Activated CD4-positive, alpha-beta memory T cell treated with anti-CD3 and anti-CD28 coated beads for 36 hours (primary cell): ENCODE measurements at regions of chr9 and their contacts with region 1.

Region 1: DNA sequence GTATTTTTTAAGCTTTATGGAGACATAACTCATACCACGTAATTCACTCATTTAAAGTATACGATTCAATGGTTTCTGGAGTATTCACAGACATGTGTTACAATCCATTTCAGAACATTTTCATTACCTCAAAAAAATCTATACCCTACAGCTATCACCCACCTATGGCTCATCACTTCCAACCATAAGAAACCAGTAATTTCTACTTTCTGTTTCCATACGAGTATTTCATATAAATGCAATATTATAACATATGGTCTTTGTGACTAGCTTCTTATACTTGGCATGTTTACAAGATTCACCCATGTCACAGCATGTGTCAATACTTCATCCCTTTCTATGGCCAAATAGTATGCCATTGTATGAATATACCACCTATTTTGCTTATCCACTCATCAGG is 18.8 kb downstream of the UBQLN1 start:
- DNase-seq: no peak
- H3K4me3 Mint-ChIP-seq: no peak overlapping the region
- H3K27ac Mint-ChIP-seq: peak overlapping the region; percentile 47
- H3K4me1 Mint-ChIP-seq: peaks cover 66% of the 10 kb centered on the region
- H3K27me3 Mint-ChIP-seq: no peaks in the 10 kb centered on the region

Region 2: DNA sequence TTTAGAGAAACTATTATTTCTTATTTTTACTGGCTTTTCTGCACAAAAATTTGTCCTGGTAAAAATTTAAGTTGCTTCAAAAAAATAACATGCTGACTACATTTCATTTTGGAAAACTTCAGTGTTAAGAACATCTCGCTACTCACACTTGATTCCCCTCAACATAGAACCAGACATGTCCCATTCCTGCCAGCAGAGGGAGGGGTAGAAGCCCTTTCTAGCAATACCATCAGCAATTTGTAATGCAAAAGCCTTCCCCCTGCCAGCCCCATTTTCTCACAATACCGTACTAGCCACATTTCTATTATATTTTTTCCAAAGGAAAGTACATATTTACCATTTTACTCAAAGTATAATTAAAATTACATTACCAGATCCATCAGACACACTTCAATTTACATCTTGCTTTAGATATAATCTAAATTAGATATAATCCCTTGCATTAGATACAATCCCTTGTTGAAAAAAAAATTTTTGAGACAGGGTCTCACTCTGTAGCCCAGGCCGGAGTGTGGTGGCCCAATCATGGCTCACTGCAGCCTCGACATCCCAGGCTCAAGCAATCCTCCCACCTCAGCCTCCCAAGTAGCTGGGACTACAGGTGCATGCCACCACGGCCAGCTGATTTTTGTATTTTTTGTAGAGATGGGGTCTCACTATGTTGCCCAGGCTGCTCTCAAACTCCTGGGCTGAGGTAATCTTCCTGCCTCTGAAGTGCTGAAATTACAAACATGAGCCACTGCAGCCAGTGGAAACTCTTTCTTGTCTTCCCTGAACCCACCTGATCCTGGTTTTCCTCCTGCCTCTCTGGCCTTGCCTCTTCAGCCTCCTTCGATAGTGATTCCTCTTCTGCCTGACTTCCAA is 105.5 kb before region 1 on chr9:
- CTCF ChIA-PET with region 1: no interaction called
- POLR2A ChIA-PET with region 1: no interaction called
- intact Hi-C with region 1: no loop called
- DNase-seq: peak; percentile 37
- H3K4me3 Mint-ChIP-seq: no peak overlapping the region
- H3K27ac Mint-ChIP-seq: no peak overlapping the region
- H3K4me1 Mint-ChIP-seq: peaks cover 7% of the 10 kb centered on the region
- H3K27me3 Mint-ChIP-seq: no peaks in the 10 kb centered on the region

Region 3: DNA sequence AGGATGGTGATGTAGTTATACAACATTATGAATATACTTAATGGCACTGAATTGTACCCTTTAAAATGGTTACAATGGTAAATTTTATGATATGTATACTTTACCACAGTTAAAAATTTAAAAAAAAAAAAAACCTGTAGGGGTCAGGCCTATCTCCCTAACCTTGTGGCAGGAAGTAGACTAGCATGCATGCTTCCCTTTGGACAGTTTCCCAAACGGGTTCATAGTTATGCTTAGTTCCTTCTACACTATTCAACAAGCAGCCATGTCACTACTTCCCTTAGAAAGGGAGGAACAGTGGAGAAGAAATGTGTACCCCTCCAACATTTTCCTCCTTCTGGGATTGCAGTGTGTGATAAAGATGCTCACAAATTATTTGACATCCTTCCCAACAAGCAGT is 33.5 kb before region 1 on chr9:
- CTCF ChIA-PET with region 1: no interaction called
- POLR2A ChIA-PET with region 1: no interaction called
- intact Hi-C with region 1: no loop called
- DNase-seq: no peak
- H3K4me3 Mint-ChIP-seq: no peak overlapping the region
- H3K27ac Mint-ChIP-seq: no peak overlapping the region
- H3K4me1 Mint-ChIP-seq: peaks cover 10% of the 10 kb centered on the region
- H3K27me3 Mint-ChIP-seq: no peaks in the 10 kb centered on the region

Region 4: GRCh38 chr9:83698976-83699585 is 10.2 kb after region 1 on chr9:
- CTCF ChIA-PET with region 1: no interaction called
- POLR2A ChIA-PET with region 1: interaction called, 6 read pairs
- intact Hi-C with region 1: loop called (anchors 1 kb)
- DNase-seq: peak; percentile 24
- H3K4me3 Mint-ChIP-seq: no peak overlapping the region
- H3K27ac Mint-ChIP-seq: peak overlapping the region; percentile 75
- H3K4me1 Mint-ChIP-seq: peaks cover 73% of the 10 kb centered on the region
- H3K27me3 Mint-ChIP-seq: no peaks in the 10 kb centered on the region

Region 5: DNA sequence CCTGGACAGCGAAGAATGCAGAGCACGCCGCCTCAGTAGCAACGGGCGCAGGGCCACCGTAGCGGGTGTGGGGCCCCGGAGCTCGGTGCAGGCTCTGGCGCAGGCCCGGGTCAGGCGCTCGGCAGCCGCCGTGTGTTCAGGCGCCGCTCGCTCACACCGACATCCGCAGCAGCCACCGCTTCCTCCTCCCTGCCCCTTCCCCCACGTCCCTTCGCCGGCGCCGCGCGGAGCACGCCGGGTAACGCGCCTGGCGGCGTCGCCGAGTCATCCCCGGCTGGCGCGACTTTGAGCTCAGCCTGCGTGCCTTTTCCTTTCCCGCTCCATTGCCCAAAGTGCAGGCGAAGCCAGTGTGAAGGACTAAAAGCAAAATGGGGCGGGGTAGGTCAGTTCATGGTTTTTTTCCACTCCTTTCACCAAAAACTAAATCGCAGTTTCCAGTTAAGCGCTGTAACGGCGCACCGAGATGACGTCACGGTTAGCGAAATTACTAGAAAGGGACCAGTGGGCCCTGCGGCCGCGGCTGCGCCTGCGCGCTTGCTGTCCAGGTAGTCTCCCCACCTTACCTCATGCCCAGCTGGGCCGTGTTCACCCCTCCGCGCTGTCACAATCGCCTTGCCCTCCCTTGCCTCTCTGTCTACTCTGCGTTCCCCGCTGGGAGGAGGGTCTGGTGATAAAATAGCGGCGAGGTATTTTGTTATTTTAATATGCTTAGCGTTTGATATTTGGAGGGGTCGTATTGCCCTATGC is 19.0 kb after region 1 on chr9 and contains the start of gene UBQLN1:
- CTCF ChIA-PET with region 1: interaction called, 12 read pairs
- POLR2A ChIA-PET with region 1: interaction called, 23 read pairs
- intact Hi-C with region 1: loop called (anchors 1 kb)
- DNase-seq: peak; percentile 94
- H3K4me3 Mint-ChIP-seq: peak within 1 kb of the TSS; percentile 87
- H3K27ac Mint-ChIP-seq: peak within 1 kb of the TSS; percentile 99
- H3K4me1 Mint-ChIP-seq: peaks cover 45% of the 10 kb centered on the region
- H3K27me3 Mint-ChIP-seq: no peaks in the 10 kb centered on the region
- total RNA-seq, gene UBQLN1: 88.8 to 101 TPM

Region 6: GRCh38 chr9:83722686-83723085 is 33.8 kb after region 1 on chr9:
- CTCF ChIA-PET with region 1: no interaction called
- POLR2A ChIA-PET with region 1: no interaction called
- intact Hi-C with region 1: no loop called
- DNase-seq: no peak
- H3K4me3 Mint-ChIP-seq: no peak overlapping the region
- H3K27ac Mint-ChIP-seq: no peak overlapping the region
- H3K4me1 Mint-ChIP-seq: no peaks in the 10 kb centered on the region
- H3K27me3 Mint-ChIP-seq: peaks cover 4% of the 10 kb centered on the region